Left cardiac atrium (tissue), 4 donors: ENCODE measurements at regions of chr21 and their contacts with region 1.

Region 1: DNA sequence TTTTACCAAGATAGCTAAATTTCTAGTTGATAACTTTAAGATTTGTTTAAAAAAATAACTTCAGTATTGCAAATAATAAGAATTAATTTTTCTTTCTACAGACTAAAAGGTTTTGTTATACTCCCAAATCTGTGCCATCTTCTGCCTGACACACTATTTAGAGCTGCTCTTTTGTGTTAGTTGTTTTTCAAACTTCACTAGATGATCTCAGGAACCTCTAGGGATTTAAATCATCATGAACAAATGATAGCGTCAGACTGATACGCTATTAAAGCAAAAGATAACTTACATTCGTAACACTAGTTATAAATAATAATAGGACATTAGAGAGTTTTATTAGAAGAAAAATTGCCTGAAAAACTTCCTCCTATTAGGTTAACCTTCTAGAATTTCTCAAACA is 243.1 kb upstream of the CXADR start:
- DNase-seq: no peak
- ATAC-seq: no peak

Region 2: GRCh38 chr21:16942703-16943102 is 327.1 kb before region 1 on chr21:
- intact Hi-C with region 1: loop called in 1 of 2 experiments (anchors 5 kb)
- DNase-seq: no peak
- ATAC-seq: no peak

Region 3: GRCh38 chr21:17427831-17428483 is 158.2 kb after region 1 on chr21:
- intact Hi-C with region 1: no loop called
- DNase-seq: no peak
- ATAC-seq: no peak